HepG2 (cell line): ENCODE measurements at regions of chr17 and their contacts with region 1.

Region 1: GRCh38 chr17:44070455-44071197 is at the start of gene G6PC3:
- DNase-seq: peak; percentile 99
- ATAC-seq: peak; percentile 84
- H3K4me3 ChIP-seq: peak within 1 kb of the TSS; percentile 63 to 96 (median 77)
- H3K27ac ChIP-seq: peak within 1 kb of the TSS; percentile 88
- H3K4me1 ChIP-seq: peaks cover 34% of the 10 kb centered on the region
- H3K27me3 ChIP-seq: peaks cover 0 to 3% of the 10 kb centered on the region in 2 experiments; a peak in 1 of 5 replicates
- CTCF ChIP-seq: peak; percentile 41
- EP300 ChIP-seq: peak; percentile 14 to 84; a peak in 3 of 4 replicates
- POLR2A ChIP-seq: peak; percentile 96 to 98
- RAD21 ChIP-seq: peak; percentile 63
- total RNA-seq, gene G6PC3: 18.8 and 38.5 TPM in 2 replicates

Region 2: GRCh38 chr17:44005527-44006271 is 64.9 kb before region 1 on chr17:
- CTCF ChIA-PET with region 1: no interaction called
- POLR2A ChIA-PET with region 1: interaction called, 18 read pairs
- in situ Hi-C with region 1: no loop called
- intact Hi-C with region 1: no loop called
- DNase-seq: no peak
- ATAC-seq: no peak
- H3K4me3 ChIP-seq: peak overlapping the region; percentile 52 to 80 (median 56)
- H3K27ac ChIP-seq: no peak overlapping the region
- H3K4me1 ChIP-seq: peaks cover 51% of the 10 kb centered on the region
- H3K27me3 ChIP-seq: no peaks in the 10 kb centered on the region
- CTCF ChIP-seq: peak; percentile 34
- EP300 ChIP-seq: no peak
- POLR2A ChIP-seq: no peak
- RAD21 ChIP-seq: no peak

Region 3: DNA sequence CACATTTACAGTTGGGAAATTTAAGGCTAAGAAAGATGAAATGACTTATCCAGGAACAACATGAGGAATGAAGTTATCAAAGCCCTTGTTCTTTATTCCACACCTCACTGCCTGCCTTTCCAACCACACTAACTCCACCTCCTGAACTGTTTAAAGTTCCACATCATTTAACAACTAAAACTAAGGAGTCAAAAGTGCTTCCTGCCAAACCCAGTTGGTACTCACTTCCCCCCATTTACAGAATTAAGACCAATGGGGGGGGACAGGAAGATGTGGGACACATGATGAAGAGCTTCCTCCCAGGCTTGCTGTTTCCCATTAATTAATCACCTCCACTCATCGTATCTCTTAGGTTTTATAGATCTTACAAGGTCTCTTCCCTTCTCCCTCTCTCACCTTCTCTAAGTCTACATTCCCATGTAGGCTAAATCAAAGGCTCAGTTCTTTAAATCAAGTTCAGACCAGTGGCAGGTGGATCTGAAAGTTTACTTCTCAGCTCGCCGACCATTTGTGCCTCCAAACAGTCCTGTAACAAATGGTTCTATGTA is 36.7 kb before region 1 on chr17:
- CTCF ChIA-PET with region 1: no interaction called
- POLR2A ChIA-PET with region 1: no interaction called
- in situ Hi-C with region 1: no loop called
- intact Hi-C with region 1: no loop called
- DNase-seq: no peak
- ATAC-seq: no peak
- H3K4me3 ChIP-seq: no peak overlapping the region
- H3K27ac ChIP-seq: no peak overlapping the region
- H3K4me1 ChIP-seq: peaks cover 8% of the 10 kb centered on the region; the same call in 1 of the 2 replicates
- H3K27me3 ChIP-seq: no peaks in the 10 kb centered on the region
- CTCF ChIP-seq: no peak
- EP300 ChIP-seq: no peak
- POLR2A ChIP-seq: no peak
- RAD21 ChIP-seq: no peak

Region 4: GRCh38 chr17:44053125-44053872 is 17.3 kb before region 1 on chr17:
- CTCF ChIA-PET with region 1: no interaction called
- POLR2A ChIA-PET with region 1: interaction called, 13 read pairs
- in situ Hi-C with region 1: no loop called
- intact Hi-C with region 1: loop called (anchors 1 kb)
- DNase-seq: no peak
- ATAC-seq: peak; percentile 38; the same call in 2 of the 3 replicates
- H3K4me3 ChIP-seq: no peak overlapping the region
- H3K27ac ChIP-seq: no peak overlapping the region
- H3K4me1 ChIP-seq: 0 out of 2 replicates have a peak, but pooled peaks cover 14% of the 10 kb centered on the region
- H3K27me3 ChIP-seq: no peaks in the 10 kb centered on the region
- CTCF ChIP-seq: no peak
- EP300 ChIP-seq: no peak
- POLR2A ChIP-seq: no peak
- RAD21 ChIP-seq: no peak

Region 5: DNA sequence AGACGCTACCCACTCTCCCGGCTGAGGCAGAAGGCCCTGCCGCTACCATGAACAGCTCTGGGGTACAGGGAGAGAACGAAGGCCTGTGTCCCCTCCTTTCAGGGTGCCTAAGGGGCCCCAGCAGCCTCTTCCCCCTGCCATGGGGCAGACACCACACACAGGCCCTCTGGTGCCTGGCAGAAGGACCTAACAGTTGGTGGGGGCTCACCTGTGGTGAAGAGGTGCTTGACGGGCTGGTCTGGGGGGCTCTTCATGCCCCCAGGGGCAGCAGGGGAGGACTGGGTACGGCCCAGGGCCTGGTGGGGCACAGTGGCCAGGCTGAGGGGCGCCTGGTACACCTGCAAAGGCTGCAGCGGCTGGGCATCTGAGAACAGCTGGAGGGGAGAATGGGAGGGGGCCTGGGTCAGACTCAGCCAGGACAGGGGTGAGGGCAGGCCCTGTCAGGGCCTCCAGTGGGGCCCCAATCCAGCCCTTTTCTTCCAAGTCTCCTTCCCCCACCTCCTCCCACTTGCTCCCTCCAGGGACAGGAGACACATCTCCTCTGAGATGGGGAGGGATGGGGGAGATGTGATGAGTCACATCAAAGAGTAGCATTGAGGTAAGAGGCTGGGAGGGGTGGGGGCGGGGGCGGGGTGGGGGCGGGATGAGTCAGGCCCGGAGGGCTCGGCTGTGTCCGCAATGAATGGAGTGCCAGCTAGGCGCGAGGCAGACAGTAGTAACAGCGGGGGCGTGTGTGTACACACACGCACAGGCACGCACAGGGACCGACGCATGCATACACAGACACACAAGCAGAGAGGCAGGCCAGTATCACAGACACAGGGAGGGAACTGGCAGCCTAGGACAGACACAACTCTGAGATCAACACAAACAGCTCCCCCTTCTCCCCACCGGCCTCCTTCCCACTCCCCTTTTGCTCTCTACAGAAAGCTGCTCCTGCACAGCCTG is 16.0 kb after region 1 on chr17:
- CTCF ChIA-PET with region 1: interaction called, 3 read pairs
- POLR2A ChIA-PET with region 1: interaction called, 11 read pairs
- in situ Hi-C with region 1: no loop called
- intact Hi-C with region 1: no loop called
- DNase-seq: peak; percentile 83
- ATAC-seq: peak; percentile 63
- H3K4me3 ChIP-seq: peak overlapping the region in 1 of 3 experiments; percentile 12; a peak in 1 of 6 replicates
- H3K27ac ChIP-seq: peak overlapping the region; percentile 15
- H3K4me1 ChIP-seq: peaks cover 31% of the 10 kb centered on the region
- H3K27me3 ChIP-seq: no peaks in the 10 kb centered on the region
- CTCF ChIP-seq: 0 out of 2 replicates have a peak, but pooled peaks have one; percentile 21
- EP300 ChIP-seq: 0 out of 4 replicates have a peak, but pooled peaks of 1 of the 2 experiments have one; percentile 15
- POLR2A ChIP-seq: peak in 1 of 2 experiments; percentile 13; a peak in 1 of 4 replicates
- RAD21 ChIP-seq: 0 out of 2 replicates have a peak, but pooled peaks have one; percentile 22

Region 6: GRCh38 chr17:44159519-44160210 is 89.0 kb after region 1 on chr17:
- CTCF ChIA-PET with region 1: no interaction called
- POLR2A ChIA-PET with region 1: no interaction called
- in situ Hi-C with region 1: no loop called
- intact Hi-C with region 1: no loop called
- DNase-seq: no peak
- ATAC-seq: no peak
- H3K4me3 ChIP-seq: no peak overlapping the region
- H3K27ac ChIP-seq: no peak overlapping the region
- H3K4me1 ChIP-seq: peaks cover 9% of the 10 kb centered on the region
- H3K27me3 ChIP-seq: no peaks in the 10 kb centered on the region
- CTCF ChIP-seq: no peak
- EP300 ChIP-seq: no peak
- POLR2A ChIP-seq: no peak
- RAD21 ChIP-seq: no peak